ENCODE measurements at regions of chr3 and their contacts with region 1.

Region 1: DNA sequence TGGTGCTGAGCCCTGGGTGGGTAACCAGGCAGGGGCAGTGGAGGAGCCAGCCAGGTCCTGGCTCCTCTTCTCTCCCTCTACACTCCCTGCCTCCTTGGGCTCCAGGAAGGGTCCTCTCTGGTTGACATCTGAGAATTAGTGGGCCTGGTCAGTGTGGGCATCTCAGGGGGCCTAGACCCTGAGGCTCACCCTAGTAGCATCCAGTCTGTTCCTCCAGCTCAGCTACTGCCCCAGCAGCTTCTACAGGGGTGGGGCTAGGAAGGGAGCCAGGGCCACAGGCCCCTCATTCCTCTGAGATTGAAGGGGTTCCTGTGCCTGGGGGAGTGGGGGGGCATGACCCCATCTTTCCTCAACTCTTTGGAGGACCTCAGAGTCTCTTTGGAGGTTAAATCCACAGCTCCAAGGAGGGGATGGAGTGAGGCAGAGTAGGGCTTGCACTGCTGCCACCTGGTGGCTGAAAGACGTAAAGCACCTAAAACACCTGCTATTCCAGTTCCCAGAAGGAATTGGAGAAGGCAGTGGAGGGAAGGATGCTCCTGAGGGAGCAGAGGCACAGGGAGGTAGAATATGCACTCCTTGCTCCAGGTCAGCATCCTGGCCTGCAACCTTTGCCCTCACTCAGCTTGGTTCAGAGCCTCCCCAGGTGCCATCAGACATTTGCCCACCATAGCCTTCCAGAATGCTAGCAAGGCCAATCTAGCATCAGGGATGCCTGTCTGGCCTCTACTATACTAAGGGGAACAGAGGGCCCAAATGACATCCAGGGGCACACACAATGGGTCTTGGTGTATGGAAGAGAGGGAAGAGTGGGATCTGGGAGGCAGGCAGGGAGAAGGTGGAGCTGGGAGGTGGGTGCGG is 25.1 kb downstream of the C3orf18 start:
- ATAC-seq: peak; percentile 70 to 93 (median 79)
- H3K4me3 ChIP-seq: no peak overlapping the region
- H3K27ac ChIP-seq: no peak overlapping the region
- H3K4me1 ChIP-seq: peaks cover 30 to 31% of the 10 kb centered on the region in 2 donors

Region 2: DNA sequence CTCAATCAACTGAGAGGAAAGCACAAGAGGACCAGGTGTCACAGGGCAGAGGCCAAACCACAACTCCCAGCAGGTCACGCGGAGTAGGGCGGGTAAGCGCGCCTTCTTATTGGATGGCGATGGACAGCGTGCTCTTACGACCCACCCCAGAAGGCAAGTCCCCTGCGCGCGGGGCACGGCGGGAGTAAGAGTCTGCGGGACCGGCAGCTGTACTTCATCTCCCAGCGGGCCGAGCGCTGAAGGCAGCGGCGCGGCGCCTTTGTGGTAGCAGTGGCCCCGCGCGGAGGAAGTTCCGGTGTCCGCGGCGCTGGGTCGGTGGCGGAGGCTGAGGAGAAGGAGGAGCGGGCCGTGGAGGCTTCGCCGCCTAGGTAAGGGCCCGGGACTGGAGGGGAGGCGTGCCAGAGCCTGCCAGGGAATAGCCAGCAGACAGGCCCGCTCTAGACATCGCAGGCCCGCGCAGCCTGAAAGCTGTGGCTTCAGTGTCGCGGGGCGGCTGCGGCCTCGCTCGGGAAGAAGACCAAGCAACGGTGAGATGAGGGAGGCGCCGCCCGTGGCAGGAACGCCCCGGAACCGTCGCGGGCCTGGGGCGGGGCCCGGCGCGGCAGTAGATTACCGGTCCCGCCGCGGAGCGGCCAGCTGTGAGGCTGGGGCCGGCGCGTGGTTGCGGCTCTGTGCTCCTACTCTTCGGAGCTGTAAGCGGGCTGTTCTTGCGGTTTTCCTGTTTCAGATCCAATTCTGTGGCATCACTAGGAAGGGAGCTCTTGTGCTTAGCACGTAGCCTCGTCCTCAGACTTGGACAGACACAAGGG is 602.3 kb before region 1 on chr3 and contains the start of gene RBM6:
- in situ Hi-C with region 1: no loop called
- ATAC-seq: peak; percentile 94 to 98 (median 97)
- H3K4me3 ChIP-seq: peak within 1 kb of the TSS; percentile 60 to 92 (median 80)
- H3K27ac ChIP-seq: peak within 1 kb of the TSS; percentile 84 to 92
- H3K4me1 ChIP-seq: peaks cover 6 to 10% of the 10 kb centered on the region in 2 donors
- total RNA-seq, gene RBM6: 52.4 to 193 (median 65.5) TPM

Region 3: GRCh38 chr3:50347194-50347918 is 195.1 kb before region 1 on chr3:
- in situ Hi-C with region 1: loop called in 1 of 9 experiments (anchors 10 kb)
- ATAC-seq: peak in 6 of 8 experiments; percentile 3 to 16 (median 4)
- H3K4me3 ChIP-seq: no peak overlapping the region
- H3K27ac ChIP-seq: no peak overlapping the region
- H3K4me1 ChIP-seq: peaks cover 22 to 31% of the 10 kb centered on the region in 2 donors

Region 4: GRCh38 chr3:50427984-50428633 is 114.3 kb before region 1 on chr3:
- in situ Hi-C with region 1: loop called in 7 of 9 experiments (anchors 10 to 25 kb)
- ATAC-seq: peak in 2 of 8 experiments; percentile 22 to 23
- H3K4me3 ChIP-seq: no peak overlapping the region
- H3K27ac ChIP-seq: no peak overlapping the region
- H3K4me1 ChIP-seq: peaks cover 0 to 7% of the 10 kb centered on the region in 2 donors

Region 5: DNA sequence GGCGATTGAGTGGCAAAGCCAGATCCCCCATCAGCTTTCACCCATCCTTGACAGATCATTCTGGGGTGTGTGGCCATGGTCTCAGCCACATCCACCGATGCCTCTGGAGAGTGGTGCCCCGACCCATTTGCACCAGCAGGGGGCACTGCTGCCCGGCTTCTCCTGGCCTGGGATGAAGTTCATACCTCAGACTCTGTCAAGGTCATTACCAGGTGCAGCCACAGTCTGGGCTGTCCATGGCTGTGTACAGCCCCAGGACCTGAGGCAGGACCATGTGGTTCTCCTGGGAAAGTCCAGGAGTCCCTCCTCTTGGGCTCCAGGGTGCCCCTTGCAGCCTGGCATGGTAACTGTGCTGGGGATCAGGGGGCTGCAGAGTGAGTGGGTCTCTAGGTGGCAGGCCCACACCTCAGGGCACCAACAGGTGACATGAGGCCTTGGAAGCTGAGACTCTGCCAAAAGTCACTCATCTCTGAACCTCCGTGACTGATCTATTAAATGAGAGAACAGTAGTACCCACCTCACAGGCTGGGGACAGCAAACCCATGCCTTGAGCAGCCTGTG is 106.2 kb before region 1 on chr3:
- in situ Hi-C with region 1: loop called in 7 of 9 experiments (anchors 5 to 25 kb)
- ATAC-seq: peak; percentile 91 to 98 (median 92)
- H3K4me3 ChIP-seq: no peak overlapping the region
- H3K27ac ChIP-seq: no peak overlapping the region
- H3K4me1 ChIP-seq: peaks cover 19 to 24% of the 10 kb centered on the region in 2 donors

Region 6: GRCh38 chr3:50749822-50750221 is 207.4 kb after region 1 on chr3:
- in situ Hi-C with region 1: no loop called
- ATAC-seq: no peak
- H3K4me3 ChIP-seq: no peak overlapping the region
- H3K27ac ChIP-seq: no peak overlapping the region
- H3K4me1 ChIP-seq: no peaks in the 10 kb centered on the region

Region 7: GRCh38 chr3:51706788-51707731 is 1164.7 kb after region 1 on chr3 and contains the start of gene GRM2:
- in situ Hi-C with region 1: no loop called
- ATAC-seq: peak; percentile 79 to 92 (median 86)
- H3K4me3 ChIP-seq: peak within 1 kb of the TSS; percentile 33 to 43 (median 41)
- H3K27ac ChIP-seq: peak within 1 kb of the TSS; percentile 46 to 61
- H3K4me1 ChIP-seq: peaks cover 47 to 49% of the 10 kb centered on the region in 2 donors
- total RNA-seq, gene GRM2: 0.27 to 22.1 (median 2.5) TPM